ENCODE measurements at regions of chr4 and their contacts with region 1.

Region 1: DNA sequence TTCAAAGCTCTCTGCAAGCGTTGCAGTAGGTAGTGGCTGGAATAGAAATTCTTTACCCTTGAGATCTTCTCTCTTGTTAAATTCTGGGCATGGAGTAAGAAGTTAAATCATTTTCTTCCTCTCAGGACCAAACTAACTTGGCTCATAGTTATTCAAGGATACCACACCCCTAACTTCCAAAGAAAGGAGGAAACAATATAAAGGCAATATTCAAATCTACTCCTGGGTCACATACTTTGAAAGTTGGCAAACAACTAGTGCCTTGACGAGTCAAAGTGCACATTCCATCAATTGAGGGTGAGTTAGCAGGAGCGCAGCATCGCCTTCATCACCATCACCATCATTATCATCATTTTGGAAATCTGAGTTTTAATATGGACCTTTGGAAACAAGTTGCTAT is 20.4 kb upstream of the KIT start:
- DNase-seq: no peak
- H3K4me3 ChIP-seq: no peak overlapping the region
- H3K4me3 Mint-ChIP-seq: no peak overlapping the region
- H3K27ac Mint-ChIP-seq: no peak overlapping the region
- H3K4me1 ChIP-seq: 0 out of 2 replicates have a peak, but pooled peaks cover 9% of the 10 kb centered on the region
- H3K4me1 Mint-ChIP-seq: peaks cover 10% of the 10 kb centered on the region
- H3K27me3 ChIP-seq: no peaks in the 10 kb centered on the region
- H3K27me3 Mint-ChIP-seq: no peaks in the 10 kb centered on the region
- CTCF ChIP-seq: no peak

Region 2: DNA sequence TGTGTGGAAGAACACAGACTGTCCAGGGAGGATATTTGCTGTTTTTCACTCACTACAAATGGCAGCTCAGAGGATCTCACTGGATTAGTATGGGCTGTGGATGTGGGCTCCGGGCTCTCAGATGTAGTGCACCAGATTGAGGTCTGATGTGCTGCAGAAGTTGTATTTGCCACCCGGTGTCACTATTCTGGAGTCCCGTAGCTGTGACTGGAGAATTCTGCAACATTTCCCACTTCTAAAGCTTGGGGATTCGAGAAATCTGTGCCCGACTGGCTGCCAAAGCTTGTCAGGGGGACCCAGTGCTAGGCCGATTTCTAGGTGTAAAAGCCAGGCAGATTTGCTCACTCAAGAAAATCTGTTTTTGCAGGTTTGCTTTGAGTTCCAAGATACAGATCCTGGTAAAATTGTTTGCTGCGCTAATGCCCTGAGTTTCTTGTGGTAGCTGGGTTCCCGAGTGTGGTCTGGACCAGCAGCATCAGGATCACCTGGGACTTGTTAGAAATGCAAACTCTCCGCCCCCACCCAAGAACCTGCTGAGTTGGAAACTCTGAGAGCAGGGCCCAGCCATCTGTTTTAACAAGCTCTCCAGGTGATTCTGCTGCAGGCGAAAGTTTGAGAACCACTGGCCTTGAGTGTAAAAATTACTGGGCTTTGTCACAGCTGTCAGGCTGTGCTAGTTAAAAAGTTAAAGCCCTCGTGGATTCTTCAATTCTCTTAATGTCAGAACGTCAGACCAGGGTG is 38.6 kb after region 1 on chr4:
- CTCF ChIA-PET with region 1: no interaction called
- POLR2A ChIA-PET with region 1: no interaction called
- intact Hi-C with region 1: loop called (anchors 1 kb)
- DNase-seq: no peak
- H3K4me3 ChIP-seq: no peak overlapping the region
- H3K4me3 Mint-ChIP-seq: no peak overlapping the region
- H3K27ac Mint-ChIP-seq: no peak overlapping the region
- H3K4me1 ChIP-seq: no peaks in the 10 kb centered on the region
- H3K4me1 Mint-ChIP-seq: no peaks in the 10 kb centered on the region
- H3K27me3 ChIP-seq: no peaks in the 10 kb centered on the region
- H3K27me3 Mint-ChIP-seq: peaks cover 13% of the 10 kb centered on the region
- CTCF ChIP-seq: no peak

Region 3: DNA sequence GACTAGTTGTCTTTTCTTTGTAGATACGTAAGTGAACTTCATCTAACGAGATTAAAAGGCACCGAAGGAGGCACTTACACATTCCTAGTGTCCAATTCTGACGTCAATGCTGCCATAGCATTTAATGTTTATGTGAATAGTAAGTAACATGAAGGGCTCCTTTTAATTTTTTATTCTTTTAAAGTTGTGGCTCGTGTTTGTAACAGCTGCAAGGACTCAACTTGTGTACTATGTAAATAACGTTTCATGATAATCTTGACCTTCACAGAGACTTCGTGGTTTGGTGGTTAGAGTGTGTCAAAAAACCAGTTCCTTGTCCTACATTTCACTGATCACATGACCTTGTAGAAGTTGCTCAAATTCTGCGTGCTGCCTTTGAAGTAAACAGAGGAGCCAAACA is 72.1 kb after region 1 on chr4:
- CTCF ChIA-PET with region 1: no interaction called
- POLR2A ChIA-PET with region 1: no interaction called
- intact Hi-C with region 1: no loop called
- DNase-seq: no peak
- H3K4me3 ChIP-seq: no peak overlapping the region
- H3K4me3 Mint-ChIP-seq: no peak overlapping the region
- H3K27ac Mint-ChIP-seq: no peak overlapping the region
- H3K4me1 ChIP-seq: no peaks in the 10 kb centered on the region
- H3K4me1 Mint-ChIP-seq: no peaks in the 10 kb centered on the region
- H3K27me3 ChIP-seq: no peaks in the 10 kb centered on the region
- H3K27me3 Mint-ChIP-seq: no peaks in the 10 kb centered on the region
- CTCF ChIP-seq: no peak

Region 4: DNA sequence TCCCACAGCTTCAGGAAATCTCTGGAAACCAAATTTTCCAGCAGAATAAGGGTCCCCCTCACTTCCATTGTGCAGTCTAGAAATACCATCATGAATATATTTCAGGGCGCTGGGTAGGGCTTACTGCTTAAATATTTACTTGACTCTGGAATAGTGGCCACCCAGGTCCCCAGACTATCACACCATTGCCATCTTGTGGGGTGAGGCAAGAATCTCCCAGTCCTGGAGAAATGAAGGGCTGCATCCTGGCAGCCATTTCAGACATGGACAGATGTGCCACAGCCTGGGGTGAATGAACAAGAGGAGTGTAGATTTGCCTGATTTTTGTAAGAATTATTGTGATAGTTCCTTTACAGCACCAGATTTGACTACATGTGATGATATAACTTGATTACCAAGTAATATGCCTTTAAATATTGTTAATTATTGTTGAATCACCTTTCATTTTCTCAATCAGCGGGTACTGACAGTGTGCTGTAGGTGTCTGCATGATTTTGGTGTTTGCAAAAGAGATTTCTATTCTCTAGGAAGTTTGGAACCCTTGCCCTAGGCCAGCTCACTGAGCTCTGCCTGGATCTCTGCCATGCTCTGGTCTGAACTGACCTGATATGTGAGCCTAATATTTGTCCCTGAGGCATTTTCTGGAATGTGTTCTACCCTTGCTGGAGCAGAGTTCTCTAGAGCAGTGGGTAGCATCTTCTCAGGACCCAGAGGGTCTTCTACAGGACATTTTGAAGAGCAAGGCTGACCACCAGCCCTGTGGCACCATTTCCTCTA is 203.9 kb after region 1 on chr4:
- CTCF ChIA-PET with region 1: no interaction called
- POLR2A ChIA-PET with region 1: no interaction called
- intact Hi-C with region 1: no loop called
- DNase-seq: peak in 1 of 2 experiments; percentile 20
- H3K4me3 ChIP-seq: no peak overlapping the region
- H3K4me3 Mint-ChIP-seq: no peak overlapping the region
- H3K27ac Mint-ChIP-seq: no peak overlapping the region
- H3K4me1 ChIP-seq: no peaks in the 10 kb centered on the region
- H3K4me1 Mint-ChIP-seq: no peaks in the 10 kb centered on the region
- H3K27me3 ChIP-seq: no peaks in the 10 kb centered on the region
- H3K27me3 Mint-ChIP-seq: peaks cover 5% of the 10 kb centered on the region
- CTCF ChIP-seq: peak; percentile 11 to 16

Region 5: GRCh38 chr4:54930226-54930625 is 292.9 kb after region 1 on chr4:
- CTCF ChIA-PET with region 1: no interaction called
- POLR2A ChIA-PET with region 1: no interaction called
- intact Hi-C with region 1: no loop called
- DNase-seq: no peak
- H3K4me3 ChIP-seq: no peak overlapping the region
- H3K4me3 Mint-ChIP-seq: no peak overlapping the region
- H3K27ac Mint-ChIP-seq: no peak overlapping the region
- H3K4me1 ChIP-seq: no peaks in the 10 kb centered on the region
- H3K4me1 Mint-ChIP-seq: no peaks in the 10 kb centered on the region
- H3K27me3 ChIP-seq: no peaks in the 10 kb centered on the region
- H3K27me3 Mint-ChIP-seq: no peaks in the 10 kb centered on the region
- CTCF ChIP-seq: no peak

Measured in Caco-2 (cell line).